ENCODE measurements at regions of chr1 and their contacts with region 1.

Region 1: GRCh38 chr1:154272217-154272998 is at the start of gene HAX1:
- DNase-seq: peak; percentile 99
- ATAC-seq: peak; percentile 91
- H3K4me3 ChIP-seq: peak within 1 kb of the TSS; percentile 88 to 99 (median 90)
- H3K4me3 Mint-ChIP-seq: peak within 1 kb of the TSS; percentile 90
- H3K27ac ChIP-seq: peak within 1 kb of the TSS; percentile 90 to 93
- H3K27ac Mint-ChIP-seq: peak within 1 kb of the TSS; percentile 94
- H3K4me1 ChIP-seq: peaks cover 14 to 21% of the 10 kb centered on the region in 2 donors
- H3K4me1 Mint-ChIP-seq: peaks cover 34% of the 10 kb centered on the region
- H3K27me3 ChIP-seq: no peaks in the 10 kb centered on the region
- H3K27me3 Mint-ChIP-seq: no peaks in the 10 kb centered on the region
- CTCF ChIP-seq: peak; percentile 82
- total RNA-seq, gene HAX1: 74.2 and 85.7 TPM in 2 replicates

Region 2: DNA sequence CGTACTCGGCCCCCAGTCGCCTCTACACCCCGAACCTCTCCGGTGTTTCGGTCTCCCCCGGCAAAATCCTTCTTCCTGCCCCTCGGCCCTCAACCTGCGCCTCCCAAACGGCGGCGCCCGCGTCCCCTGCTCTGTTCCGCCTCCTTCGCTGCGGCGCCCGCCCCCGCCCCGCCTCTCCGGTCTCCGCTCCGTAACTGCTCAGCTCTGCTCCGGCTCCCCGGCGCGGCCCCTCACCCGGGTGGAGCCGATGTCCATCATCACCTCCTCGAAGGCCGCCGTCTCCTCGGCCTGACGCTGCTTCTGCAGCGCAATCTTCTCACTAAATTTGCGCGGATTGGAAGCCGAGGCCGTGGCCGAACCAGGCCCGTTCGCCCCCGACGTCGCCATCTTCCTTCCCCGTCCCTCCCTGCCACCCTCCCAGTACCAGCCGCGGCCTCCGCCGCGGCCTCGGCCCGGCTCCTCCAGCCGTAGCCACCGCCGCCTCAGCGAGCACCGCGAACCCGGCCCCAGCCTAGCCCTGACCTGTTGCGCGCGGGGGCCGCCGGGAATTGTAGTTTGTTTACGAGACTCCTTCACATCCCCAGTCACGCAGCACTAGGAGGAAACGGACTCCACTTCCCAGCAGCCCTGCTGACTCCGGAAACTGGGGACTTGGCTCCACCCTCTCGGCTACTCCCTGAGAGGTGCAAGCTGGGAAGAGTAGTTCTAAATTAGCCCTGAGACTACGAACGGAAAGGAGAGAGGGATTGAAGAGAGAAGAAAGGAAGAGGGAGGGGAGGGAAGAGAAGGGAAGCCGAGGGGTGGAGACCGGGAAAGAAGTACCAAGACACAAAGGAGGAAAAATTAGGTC is 314.1 kb before region 1 on chr1 and contains the start of gene CRTC2:
- CTCF ChIA-PET with region 1: interaction called, 3 read pairs
- POLR2A ChIA-PET with region 1: no interaction called
- intact Hi-C with region 1: loop called (anchors 5 kb)
- DNase-seq: peak; percentile 97
- ATAC-seq: peak; percentile 85
- H3K4me3 ChIP-seq: peak within 1 kb of the TSS; percentile 79 to 98 (median 92)
- H3K4me3 Mint-ChIP-seq: peak within 1 kb of the TSS; percentile 100
- H3K27ac ChIP-seq: peak within 1 kb of the TSS; percentile 87 to 97
- H3K27ac Mint-ChIP-seq: peak within 1 kb of the TSS; percentile 97
- H3K4me1 ChIP-seq: peaks cover 44 to 47% of the 10 kb centered on the region in 2 donors
- H3K4me1 Mint-ChIP-seq: peaks cover 67% of the 10 kb centered on the region
- H3K27me3 ChIP-seq: no peaks in the 10 kb centered on the region
- H3K27me3 Mint-ChIP-seq: no peaks in the 10 kb centered on the region
- CTCF ChIP-seq: no peak
- total RNA-seq, gene CRTC2: 153 and 157 TPM in 2 replicates

Region 3: GRCh38 chr1:153977250-153978240 is 294.9 kb before region 1 on chr1 and contains the start of gene JTB:
- CTCF ChIA-PET with region 1: no interaction called
- POLR2A ChIA-PET with region 1: no interaction called
- intact Hi-C with region 1: no loop called
- DNase-seq: peak; percentile 87
- ATAC-seq: peak; percentile 96
- H3K4me3 ChIP-seq: peak within 1 kb of the TSS; percentile 59 to 96 (median 90)
- H3K4me3 Mint-ChIP-seq: peak within 1 kb of the TSS; percentile 98
- H3K27ac ChIP-seq: peak within 1 kb of the TSS; percentile 55 to 87
- H3K27ac Mint-ChIP-seq: peak within 1 kb of the TSS; percentile 96
- H3K4me1 ChIP-seq: peaks cover 16 to 22% of the 10 kb centered on the region in 2 donors
- H3K4me1 Mint-ChIP-seq: peaks cover 34% of the 10 kb centered on the region
- H3K27me3 ChIP-seq: no peaks in the 10 kb centered on the region
- H3K27me3 Mint-ChIP-seq: no peaks in the 10 kb centered on the region
- CTCF ChIP-seq: no peak
- total RNA-seq, gene JTB: 99.1 and 106 TPM in 2 replicates

Region 4: DNA sequence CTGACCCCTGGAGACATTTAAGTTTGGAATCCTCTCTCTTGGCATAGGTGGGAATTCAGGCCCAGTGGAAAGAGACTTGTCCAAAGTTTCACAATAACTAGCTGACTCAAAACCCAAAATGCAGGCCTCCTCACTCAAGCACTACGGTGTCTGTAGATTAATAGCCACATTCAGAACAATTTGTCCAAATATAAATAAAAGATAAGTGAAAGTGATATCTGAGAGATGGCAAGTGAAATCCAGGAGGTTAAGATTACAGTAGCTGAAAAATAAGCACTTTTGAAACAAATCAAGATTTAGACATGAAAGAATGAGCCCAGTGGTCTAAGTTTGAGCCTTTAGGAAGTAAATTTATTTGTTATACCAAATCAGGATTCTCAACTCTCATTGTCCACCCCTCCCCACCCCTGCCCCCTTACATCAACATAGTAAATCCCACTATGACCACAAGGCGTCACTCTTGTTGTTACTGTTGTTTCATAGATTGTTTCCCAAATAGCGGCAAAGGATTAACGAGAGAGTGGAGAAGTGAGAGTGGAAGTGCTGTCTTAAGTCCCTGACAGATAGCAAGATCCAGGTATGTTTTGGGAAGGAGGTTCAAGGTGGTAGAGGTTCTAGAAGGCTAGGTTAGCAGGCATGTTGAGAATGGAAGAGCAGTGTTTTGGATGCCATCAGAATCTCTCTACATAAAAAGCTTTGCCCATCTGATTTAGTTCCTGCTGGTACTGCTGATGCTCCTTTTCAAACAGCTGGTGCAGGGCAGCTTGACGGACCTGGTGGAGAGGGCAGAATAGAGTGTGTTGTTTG is 73.4 kb before region 1 on chr1:
- CTCF ChIA-PET with region 1: interaction called, 27 read pairs
- POLR2A ChIA-PET with region 1: interaction called, 3 read pairs
- intact Hi-C with region 1: loop called (anchors 1 kb)
- DNase-seq: peak; percentile 77
- ATAC-seq: peak; percentile 76
- H3K4me3 ChIP-seq: no peak overlapping the region
- H3K4me3 Mint-ChIP-seq: no peak overlapping the region
- H3K27ac ChIP-seq: peak overlapping the region in 1 of 2 donors; percentile 28
- H3K27ac Mint-ChIP-seq: no peak overlapping the region
- H3K4me1 ChIP-seq: peaks cover 5 to 10% of the 10 kb centered on the region in 2 donors
- H3K4me1 Mint-ChIP-seq: no peaks in the 10 kb centered on the region
- H3K27me3 ChIP-seq: no peaks in the 10 kb centered on the region
- H3K27me3 Mint-ChIP-seq: peaks cover 4% of the 10 kb centered on the region
- CTCF ChIP-seq: peak; percentile 73

Region 5: DNA sequence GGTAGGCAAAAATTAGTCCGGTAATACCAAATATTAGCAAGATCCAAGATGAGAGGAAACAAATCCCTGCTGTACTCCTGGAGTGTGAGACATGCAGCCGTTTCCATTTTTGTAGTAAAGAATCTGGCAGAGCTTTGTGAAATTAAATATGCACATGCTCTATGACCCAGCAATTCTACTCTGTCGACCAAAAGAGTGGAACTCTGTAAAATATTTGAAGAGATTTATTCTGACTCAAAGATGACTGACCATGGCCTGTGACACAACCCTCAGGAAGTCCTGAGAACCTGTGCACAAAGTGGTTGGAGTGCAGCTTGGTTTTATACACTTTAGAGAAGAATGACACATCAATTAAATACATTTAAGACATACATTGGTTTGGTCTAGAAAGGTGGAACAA is 16.3 kb after region 1 on chr1:
- CTCF ChIA-PET with region 1: no interaction called
- POLR2A ChIA-PET with region 1: no interaction called
- intact Hi-C with region 1: no loop called
- DNase-seq: no peak
- ATAC-seq: no peak
- H3K4me3 ChIP-seq: no peak overlapping the region
- H3K4me3 Mint-ChIP-seq: no peak overlapping the region
- H3K27ac ChIP-seq: no peak overlapping the region
- H3K27ac Mint-ChIP-seq: no peak overlapping the region
- H3K4me1 ChIP-seq: no peaks in the 10 kb centered on the region
- H3K4me1 Mint-ChIP-seq: no peaks in the 10 kb centered on the region
- H3K27me3 ChIP-seq: peaks cover 0 to 8% (median 0%) of the 10 kb centered on the region in 4 experiments
- H3K27me3 Mint-ChIP-seq: peaks cover 3% of the 10 kb centered on the region
- CTCF ChIP-seq: no peak

Region 6: GRCh38 chr1:154324669-154325582 is 52.5 kb after region 1 on chr1 and contains the start of gene ATP8B2:
- CTCF ChIA-PET with region 1: interaction called, 7 read pairs
- POLR2A ChIA-PET with region 1: interaction called, 6 read pairs
- intact Hi-C with region 1: loop called (anchors 2 kb)
- DNase-seq: peak; percentile 89
- ATAC-seq: peak; percentile 68
- H3K4me3 ChIP-seq: peak within 1 kb of the TSS; percentile 57 to 90 (median 87)
- H3K4me3 Mint-ChIP-seq: peak within 1 kb of the TSS; percentile 93
- H3K27ac ChIP-seq: peak within 1 kb of the TSS; percentile 48 to 67
- H3K27ac Mint-ChIP-seq: peak within 1 kb of the TSS; percentile 89
- H3K4me1 ChIP-seq: peaks cover 30 to 46% of the 10 kb centered on the region in 2 donors
- H3K4me1 Mint-ChIP-seq: peaks cover 42% of the 10 kb centered on the region
- H3K27me3 ChIP-seq: peaks cover 0 to 18% (median 3%) of the 10 kb centered on the region in 4 experiments
- H3K27me3 Mint-ChIP-seq: peaks cover 15% of the 10 kb centered on the region
- CTCF ChIP-seq: peak; percentile 92
- total RNA-seq, gene ATP8B2: 31.1 and 32.4 TPM in 2 replicates

Region 7: DNA sequence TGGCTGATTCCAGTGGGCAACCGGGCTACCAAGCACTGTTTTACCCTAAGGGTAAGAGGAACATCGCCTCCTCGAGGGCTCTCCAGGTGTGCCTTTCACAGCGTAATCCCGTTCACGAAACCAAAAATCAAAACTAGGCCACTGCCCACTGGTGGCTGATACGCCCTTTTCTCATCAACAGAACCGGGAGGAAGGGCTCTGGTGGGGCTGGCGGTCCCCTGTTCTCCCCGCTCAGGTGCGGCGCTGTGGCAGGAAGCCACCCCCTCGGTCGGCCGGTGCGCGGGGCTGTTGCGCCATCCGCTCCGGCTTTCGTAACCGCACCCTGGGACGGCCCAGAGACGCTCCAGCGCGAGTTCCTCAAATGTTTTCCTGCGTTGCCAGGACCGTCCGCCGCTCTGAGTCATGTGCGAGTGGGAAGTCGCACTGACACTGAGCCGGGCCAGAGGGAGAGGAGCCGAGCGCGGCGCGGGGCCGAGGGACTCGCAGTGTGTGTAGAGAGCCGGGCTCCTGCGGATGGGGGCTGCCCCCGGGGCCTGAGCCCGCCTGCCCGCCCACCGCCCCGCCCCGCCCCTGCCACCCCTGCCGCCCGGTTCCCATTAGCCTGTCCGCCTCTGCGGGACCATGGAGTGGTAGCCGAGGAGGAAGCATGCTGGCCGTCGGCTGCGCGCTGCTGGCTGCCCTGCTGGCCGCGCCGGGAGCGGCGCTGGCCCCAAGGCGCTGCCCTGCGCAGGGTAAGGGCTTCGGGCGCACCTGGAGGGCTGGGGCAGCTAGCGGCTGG is 132.8 kb after region 1 on chr1 and contains the start of gene IL6R:
- CTCF ChIA-PET with region 1: no interaction called
- POLR2A ChIA-PET with region 1: interaction called, 11 read pairs
- intact Hi-C with region 1: no loop called
- DNase-seq: peak; percentile 86
- ATAC-seq: peak; percentile 59
- H3K4me3 ChIP-seq: peak within 1 kb of the TSS; percentile 32 to 65 (median 61)
- H3K4me3 Mint-ChIP-seq: peak within 1 kb of the TSS; percentile 87
- H3K27ac ChIP-seq: peak within 1 kb of the TSS in 1 of 2 donors; percentile 35
- H3K27ac Mint-ChIP-seq: peak within 1 kb of the TSS; percentile 74
- H3K4me1 ChIP-seq: peaks cover 47 to 71% of the 10 kb centered on the region in 2 donors
- H3K4me1 Mint-ChIP-seq: peaks cover 56% of the 10 kb centered on the region
- H3K27me3 ChIP-seq: peaks cover 0 to 16% (median 3%) of the 10 kb centered on the region in 4 experiments
- H3K27me3 Mint-ChIP-seq: no peaks in the 10 kb centered on the region
- CTCF ChIP-seq: peak; percentile 13
- total RNA-seq, gene IL6R: 5.3 TPM in 2 replicates

Measured in B cell (primary cell).